ENCODE measurements at regions of chr2 and their contacts with region 1.

Region 1: GRCh38 chr2:235595422-235596010 is 101.7 kb downstream of the AGAP1 start:
- DNase-seq: no peak
- ATAC-seq: peak; percentile 63 to 71
- H3K4me3 ChIP-seq: no peak overlapping the region
- H3K27ac ChIP-seq: peak overlapping the region; percentile 18
- H3K4me1 ChIP-seq: peaks cover 11% of the 10 kb centered on the region
- H3K27me3 ChIP-seq: no peaks in the 10 kb centered on the region
- CTCF ChIP-seq: peak; percentile 83

Region 2: GRCh38 chr2:235106874-235107639 is 488.5 kb before region 1 on chr2:
- intact Hi-C with region 1: no loop called
- DNase-seq: no peak
- ATAC-seq: peak; percentile 43 to 60
- H3K4me3 ChIP-seq: no peak overlapping the region
- H3K27ac ChIP-seq: no peak overlapping the region
- H3K4me1 ChIP-seq: no peaks in the 10 kb centered on the region
- H3K27me3 ChIP-seq: no peaks in the 10 kb centered on the region
- CTCF ChIP-seq: peak; percentile 64

Region 3: DNA sequence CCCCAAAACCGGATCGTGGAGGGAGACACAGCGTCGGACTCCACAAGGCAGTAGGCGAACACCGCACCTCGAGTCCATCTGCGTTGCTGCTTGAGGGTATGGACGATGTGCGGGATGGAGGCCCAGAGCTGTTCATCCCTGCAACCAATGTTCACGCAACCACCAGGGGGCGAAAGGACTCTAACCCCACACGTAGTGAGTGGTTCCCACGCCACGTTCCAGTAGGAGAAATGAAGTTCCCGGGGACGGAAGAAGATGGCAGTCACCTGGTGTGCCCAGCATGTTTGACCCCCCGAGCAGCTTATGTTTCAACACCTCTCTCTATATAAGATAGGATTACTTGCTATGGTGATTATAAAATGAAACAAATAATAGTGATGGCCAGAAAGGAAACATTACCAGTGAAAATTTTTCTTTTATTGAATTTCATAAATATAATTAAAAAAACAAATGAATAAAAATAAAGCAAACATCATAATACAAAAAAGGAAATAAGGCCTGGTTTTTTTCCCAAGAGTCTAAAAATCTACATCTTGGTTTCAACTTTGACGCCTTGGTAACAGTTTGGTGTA is 459.4 kb before region 1 on chr2:
- intact Hi-C with region 1: loop called (anchors 5 kb)
- DNase-seq: peak; percentile 83
- ATAC-seq: peak; percentile 84 to 90
- H3K4me3 ChIP-seq: no peak overlapping the region
- H3K27ac ChIP-seq: no peak overlapping the region
- H3K4me1 ChIP-seq: no peaks in the 10 kb centered on the region
- H3K27me3 ChIP-seq: no peaks in the 10 kb centered on the region
- CTCF ChIP-seq: peak; percentile 80

Region 4: DNA sequence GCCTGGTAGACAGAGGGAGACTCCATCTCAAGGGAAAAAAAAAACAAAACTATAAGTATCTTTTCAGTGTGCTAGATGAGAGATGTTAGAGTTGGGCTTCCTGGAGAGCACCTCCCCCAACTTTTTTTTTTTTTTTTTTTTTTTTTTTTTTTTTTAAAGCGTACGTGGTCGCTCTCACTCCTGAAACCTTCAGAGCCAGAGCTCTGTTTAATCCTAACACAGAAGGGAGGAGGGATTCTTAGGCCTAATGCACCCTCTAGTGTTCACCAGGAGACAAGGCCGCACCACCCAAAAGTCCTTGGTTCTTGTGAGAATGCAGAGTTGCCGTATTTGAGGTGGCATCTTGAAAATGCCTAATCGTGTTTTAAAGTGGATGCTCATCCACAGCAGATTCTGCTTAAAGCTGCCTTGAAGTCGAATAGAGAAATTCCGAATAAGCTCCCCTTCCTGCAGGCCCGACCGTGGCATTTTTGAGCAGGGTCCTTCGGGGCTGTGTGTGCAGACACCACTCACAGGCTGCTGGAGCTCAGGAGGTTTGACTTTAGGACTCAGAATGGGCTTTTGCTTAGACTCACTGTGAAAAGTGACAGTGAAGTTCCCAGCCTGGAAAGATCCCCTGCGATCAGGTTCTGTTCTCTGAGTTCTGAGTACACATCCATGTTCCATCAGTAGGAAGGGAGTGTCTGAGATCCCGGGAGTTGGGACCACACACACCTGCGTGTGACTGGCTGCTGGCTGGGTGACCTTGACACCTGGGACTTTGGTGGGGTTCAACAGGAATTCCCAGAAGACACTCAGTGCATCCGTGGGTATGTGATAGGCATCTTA is 151.0 kb after region 1 on chr2:
- intact Hi-C with region 1: loop called (anchors 10 kb)
- DNase-seq: no peak
- ATAC-seq: peak; percentile 85 to 87
- H3K4me3 ChIP-seq: no peak overlapping the region
- H3K27ac ChIP-seq: no peak overlapping the region
- H3K4me1 ChIP-seq: no peaks in the 10 kb centered on the region
- H3K27me3 ChIP-seq: no peaks in the 10 kb centered on the region
- CTCF ChIP-seq: peak; percentile 86

Measured in lower lobe of right lung (tissue), 2 donors.